Activated CD4-positive, alpha-beta T cell treated with anti-CD3 and anti-CD28 coated beads, Interleukin-2, amount 10 ng/mL, durations not matched to agents 24 days and 14 days (primary cell): ENCODE measurements at regions of chr15 and their contacts with region 1.

Region 1: DNA sequence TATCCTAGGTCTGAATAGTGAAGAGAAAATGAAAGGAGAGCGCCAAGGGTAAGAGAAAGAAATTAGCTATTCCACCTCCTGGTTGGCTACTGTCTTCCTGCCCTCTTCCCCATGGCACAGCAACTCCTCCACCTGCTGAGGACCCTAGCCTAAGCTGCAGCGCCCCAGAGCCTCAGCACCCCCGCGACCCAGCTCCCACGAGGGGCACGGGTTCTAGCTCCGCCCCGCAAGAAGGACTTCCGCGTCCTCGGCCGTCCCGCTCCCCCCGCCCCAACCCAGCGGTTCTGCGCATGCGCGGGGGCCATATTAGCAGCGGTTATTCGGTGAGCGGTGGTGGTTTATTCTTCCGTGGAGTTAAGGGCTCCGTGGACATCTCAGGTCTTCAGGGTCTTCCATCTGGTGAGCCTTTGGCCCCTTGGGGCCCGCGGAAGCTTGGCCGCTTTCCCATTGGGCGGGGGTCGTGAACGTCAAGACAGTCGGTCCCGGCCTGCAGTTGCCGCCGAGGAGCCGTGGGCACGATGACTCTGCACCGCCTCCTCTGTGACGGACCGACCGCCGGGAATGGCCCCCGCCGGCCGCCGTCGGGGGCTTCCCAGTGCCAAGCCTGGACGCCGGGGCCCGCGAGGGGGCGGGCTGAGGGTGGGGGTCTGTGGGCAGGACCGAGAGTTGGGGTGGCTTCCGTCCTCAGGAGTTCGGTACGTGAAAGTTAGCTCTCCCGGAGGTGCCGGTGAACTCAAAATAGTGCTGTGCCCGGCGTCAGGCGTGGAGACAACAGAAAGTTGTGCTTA is at the start of gene PSMA4:
- DNase-seq: peak; percentile 99
- H3K4me3 Mint-ChIP-seq: peak within 1 kb of the TSS; percentile 90
- H3K27ac Mint-ChIP-seq: peak within 1 kb of the TSS; percentile 96
- H3K4me1 Mint-ChIP-seq: peaks cover 28% of the 10 kb centered on the region
- H3K27me3 Mint-ChIP-seq: no peaks in the 10 kb centered on the region
- total RNA-seq, gene PSMA4: 335 and 342 TPM in 2 replicates

Region 2: DNA sequence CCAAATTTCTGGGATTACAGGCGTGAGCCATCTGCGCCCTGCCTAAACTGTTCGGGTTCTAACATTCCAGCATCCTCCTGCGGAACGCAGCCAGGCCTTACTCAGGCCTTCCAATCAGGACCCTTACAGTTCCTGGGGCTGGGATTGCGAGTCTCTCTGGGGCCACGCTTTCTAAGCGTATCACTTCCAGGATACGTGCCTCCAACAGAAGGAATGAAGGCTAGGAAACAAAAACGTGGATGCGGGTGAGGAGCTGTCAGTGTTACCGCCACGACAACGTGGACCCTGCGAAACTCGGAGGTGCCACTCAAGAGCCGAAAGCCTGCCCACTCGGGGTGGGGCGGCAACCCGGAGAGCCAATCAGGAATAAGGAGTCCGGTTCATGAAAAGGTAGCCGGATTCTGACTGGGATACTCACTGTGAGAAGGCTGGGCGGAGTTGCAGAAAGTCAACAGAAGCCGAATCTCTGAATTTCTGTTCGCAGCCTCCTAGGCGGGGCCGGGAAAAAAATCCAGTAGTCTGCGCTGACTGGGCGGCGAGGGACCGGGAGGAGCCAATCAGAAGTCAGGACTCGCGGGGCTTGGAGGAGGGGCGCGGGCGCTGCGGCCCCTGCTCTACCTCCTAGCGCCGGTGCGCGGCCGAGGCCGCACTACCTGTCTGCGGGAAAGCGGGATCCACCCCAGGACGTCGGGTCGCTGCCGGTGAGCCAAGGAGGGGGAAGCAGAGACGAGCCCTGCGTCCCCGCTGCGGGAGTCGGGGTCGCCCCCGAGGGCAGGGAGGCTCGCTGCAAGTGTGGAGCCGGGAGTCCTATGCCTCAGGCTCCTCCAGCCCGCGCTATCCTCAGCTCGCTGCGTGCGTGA is 33.1 kb before region 1 on chr15 and contains the start of gene HYKK:
- intact Hi-C with region 1: loop called (anchors 1 kb)
- DNase-seq: peak; percentile 94
- H3K4me3 Mint-ChIP-seq: peak within 1 kb of the TSS; percentile 90
- H3K27ac Mint-ChIP-seq: peak within 1 kb of the TSS; percentile 72
- H3K4me1 Mint-ChIP-seq: peaks cover 18% of the 10 kb centered on the region
- H3K27me3 Mint-ChIP-seq: peaks cover 5% of the 10 kb centered on the region
- total RNA-seq, gene HYKK: 0.90 and 1.6 TPM in 2 replicates

Region 3: DNA sequence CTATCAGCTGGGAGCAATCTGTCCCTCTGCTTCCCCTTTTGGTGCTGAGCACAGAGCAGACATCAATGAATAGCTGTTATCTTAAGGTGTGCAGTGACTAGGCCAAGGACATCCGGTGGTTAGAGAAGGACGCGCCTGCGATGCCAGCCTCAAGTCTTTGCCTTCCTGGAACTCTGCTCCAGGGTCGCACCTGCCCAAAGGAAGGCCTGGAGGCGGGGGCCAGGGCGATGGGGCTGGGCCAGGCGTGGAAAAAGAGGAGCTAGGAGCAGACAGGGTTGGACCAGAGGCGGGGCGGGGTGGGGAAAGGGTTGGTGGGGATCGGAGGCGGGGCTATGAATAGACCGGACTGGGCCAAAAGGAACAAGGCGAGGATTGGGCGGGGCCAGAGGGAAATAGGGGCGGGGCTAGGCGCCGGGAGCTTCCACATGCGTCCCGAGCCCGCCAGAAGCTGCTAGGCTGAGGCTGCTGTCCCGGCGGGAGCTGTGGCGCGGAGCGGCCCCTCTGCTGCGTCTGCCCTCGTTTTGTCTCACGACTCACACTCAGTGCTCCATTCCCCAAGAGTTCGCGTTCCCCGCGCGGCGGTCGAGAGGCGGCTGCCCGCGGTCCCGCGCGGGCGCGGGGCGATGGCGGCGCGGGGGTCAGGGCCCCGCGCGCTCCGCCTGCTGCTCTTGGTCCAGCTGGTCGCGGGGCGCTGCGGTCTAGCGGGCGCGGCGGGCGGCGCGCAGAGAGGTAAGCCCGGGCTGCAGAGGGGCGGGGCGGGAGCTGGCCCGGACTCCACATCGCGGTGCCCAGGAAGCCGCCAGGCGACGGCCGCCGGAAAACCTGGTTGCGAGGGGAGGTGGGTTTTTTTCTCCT is 25.0 kb after region 1 on chr15 and contains the start of gene CHRNA5:
- intact Hi-C with region 1: loop called (anchors 1 kb)
- DNase-seq: peak; percentile 87
- H3K4me3 Mint-ChIP-seq: peak within 1 kb of the TSS; percentile 87
- H3K27ac Mint-ChIP-seq: peak within 1 kb of the TSS; percentile 78
- H3K4me1 Mint-ChIP-seq: peaks cover 23% of the 10 kb centered on the region
- H3K27me3 Mint-ChIP-seq: peaks cover 33% of the 10 kb centered on the region
- total RNA-seq, gene CHRNA5: 8.9 and 10.1 TPM in 2 replicates